PC-9 (cell line): ENCODE measurements at regions of chr16 and their contacts with region 1.

Region 1: DNA sequence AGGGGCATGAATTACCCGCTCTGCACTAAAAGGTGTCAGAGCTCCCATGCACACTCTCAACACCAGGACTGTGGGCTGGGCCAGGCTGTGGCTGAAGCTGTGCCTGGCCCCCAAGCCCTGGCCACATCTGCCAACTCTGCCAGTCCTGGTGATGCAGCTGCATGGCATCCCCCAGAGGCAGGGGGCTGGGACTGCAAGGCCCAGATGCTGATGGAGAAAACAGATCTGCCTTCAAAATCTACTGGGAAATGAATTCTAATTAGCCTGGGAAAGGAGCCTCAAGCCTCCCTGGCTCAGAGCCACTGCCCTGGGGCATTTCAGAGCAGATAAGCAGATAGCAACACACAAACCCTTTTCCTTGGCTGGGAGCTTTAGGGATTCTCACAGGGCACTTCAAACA is 3.4 kb downstream of the CHST6 start:
- DNase-seq: peak; percentile 77 to 88
- H3K4me3 ChIP-seq: no peak overlapping the region
- H3K27ac ChIP-seq: no peak overlapping the region
- H3K4me1 ChIP-seq: peaks cover 24% of the 10 kb centered on the region
- H3K27me3 ChIP-seq: no peaks in the 10 kb centered on the region
- CTCF ChIP-seq: peak; percentile 52

Region 2: DNA sequence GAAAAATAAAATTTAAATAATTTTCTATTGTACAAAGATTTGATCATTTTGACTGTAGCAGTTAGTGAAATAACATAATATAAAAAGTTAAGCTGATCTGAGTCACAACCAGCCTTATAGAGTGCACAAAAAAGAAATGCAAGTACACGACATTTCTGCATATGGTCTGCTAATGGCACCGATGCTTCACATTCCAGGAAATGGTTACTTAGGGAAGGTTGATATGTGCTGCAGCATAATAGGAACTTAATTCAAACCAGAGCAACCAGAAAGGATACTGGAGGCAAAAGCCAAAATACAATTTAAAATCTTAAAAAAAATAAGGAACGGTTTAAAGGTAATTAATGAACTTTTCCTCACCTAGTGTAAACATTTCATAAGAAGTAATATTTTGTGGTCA is 48.6 kb before region 1 on chr16:
- CTCF ChIA-PET with region 1: no interaction called
- POLR2A ChIA-PET with region 1: no interaction called
- intact Hi-C with region 1: no loop called
- DNase-seq: no peak
- H3K4me3 ChIP-seq: no peak overlapping the region
- H3K27ac ChIP-seq: no peak overlapping the region
- H3K4me1 ChIP-seq: no peaks in the 10 kb centered on the region
- H3K27me3 ChIP-seq: no peaks in the 10 kb centered on the region
- CTCF ChIP-seq: no peak

Region 3: DNA sequence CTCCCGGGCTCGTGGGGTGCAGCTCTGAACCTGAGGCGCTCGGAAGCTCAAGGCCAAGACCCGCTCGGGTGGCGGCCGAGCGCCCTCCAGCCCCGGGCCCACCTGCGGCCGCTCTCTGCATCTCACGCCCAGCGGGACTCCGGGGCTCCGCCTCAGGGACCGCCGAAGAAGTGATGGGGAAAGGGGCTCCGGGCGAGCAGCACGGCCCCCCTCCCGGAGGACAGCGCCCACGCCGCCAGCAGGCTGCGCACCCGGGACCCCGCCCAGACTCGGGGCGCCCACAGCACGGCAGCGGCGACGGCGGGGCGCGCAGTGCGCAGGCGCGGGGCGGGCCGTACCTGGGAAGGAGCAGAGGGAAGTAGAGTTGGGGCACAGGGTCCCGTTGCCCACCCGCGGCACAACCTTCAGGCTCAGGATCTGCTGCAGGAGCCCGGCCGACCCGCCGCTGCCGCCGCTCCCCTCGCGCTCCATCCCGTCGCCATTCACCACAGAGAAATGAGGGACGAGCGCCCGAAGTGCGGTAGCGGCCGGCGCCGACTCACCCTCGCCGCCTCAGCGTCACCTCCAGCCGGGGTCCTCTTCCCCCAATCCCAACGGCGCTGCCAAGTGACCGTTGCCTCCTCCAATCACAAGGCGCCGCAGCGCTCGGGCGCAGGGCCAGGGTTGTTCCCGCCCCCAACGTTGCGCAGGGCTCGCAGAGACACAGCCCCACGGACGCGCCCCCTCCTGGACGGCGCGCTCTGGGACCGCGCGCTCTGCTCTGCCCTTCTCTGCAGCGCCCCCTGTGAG is 27.6 kb before region 1 on chr16 and contains the start of gene TMEM170A:
- CTCF ChIA-PET with region 1: interaction called, 10 read pairs
- POLR2A ChIA-PET with region 1: no interaction called
- intact Hi-C with region 1: no loop called
- DNase-seq: peak; percentile 91 to 99
- H3K4me3 ChIP-seq: peak within 1 kb of the TSS; percentile 61
- H3K27ac ChIP-seq: peak within 1 kb of the TSS; percentile 45
- H3K4me1 ChIP-seq: peaks cover 18% of the 10 kb centered on the region
- H3K27me3 ChIP-seq: no peaks in the 10 kb centered on the region
- CTCF ChIP-seq: peak; percentile 100
- total RNA-seq, gene TMEM170A: 31.4 and 31.7 TPM in 2 replicates

Region 4: DNA sequence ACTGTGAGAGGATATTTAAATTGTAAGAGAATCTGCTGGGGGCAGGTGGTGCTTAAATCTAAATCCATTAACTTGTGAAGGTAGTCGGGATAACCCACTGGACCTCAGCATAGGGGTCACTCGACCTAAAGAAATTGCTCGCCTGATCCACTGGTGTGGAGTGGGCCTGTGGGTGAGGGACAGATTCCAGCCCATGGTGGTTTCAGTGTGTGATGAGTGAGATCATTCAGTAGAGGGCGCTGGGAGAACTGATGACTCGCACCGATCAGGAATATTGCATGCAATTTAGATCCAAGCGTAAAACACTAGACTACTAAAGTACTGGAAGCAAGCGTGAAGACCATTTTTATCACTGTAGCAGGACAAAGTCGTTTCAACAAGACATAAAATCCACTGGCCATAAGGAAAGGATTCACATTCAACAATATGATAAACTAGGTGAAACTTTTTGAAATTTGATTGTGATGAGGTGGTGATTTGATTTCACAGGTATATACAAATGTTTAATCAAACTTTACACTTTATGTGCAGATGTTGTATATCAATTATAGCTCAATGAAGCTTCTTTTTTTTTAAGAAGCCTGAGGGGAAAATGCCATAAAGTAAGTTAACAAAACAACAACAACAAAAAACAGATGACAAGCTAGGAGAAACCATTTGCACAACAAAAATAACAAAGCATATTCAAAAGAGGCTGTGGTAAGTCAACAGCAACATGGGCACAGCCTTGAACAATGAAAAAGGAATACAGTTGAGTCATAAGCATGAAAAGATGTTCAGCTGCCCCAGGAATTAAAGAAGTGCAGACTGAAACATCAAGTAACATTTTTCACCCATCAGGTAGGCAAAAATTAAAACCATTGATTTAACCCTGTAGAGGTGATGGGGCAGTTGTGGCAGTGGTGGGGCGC is 19.9 kb before region 1 on chr16:
- CTCF ChIA-PET with region 1: no interaction called
- POLR2A ChIA-PET with region 1: no interaction called
- intact Hi-C with region 1: loop called (anchors 1 kb)
- DNase-seq: peak; percentile 45 to 54
- H3K4me3 ChIP-seq: no peak overlapping the region
- H3K27ac ChIP-seq: no peak overlapping the region
- H3K4me1 ChIP-seq: 0 out of 2 replicates have a peak, but pooled peaks cover 5% of the 10 kb centered on the region
- H3K27me3 ChIP-seq: no peaks in the 10 kb centered on the region
- CTCF ChIP-seq: peak; percentile 81

Region 5: DNA sequence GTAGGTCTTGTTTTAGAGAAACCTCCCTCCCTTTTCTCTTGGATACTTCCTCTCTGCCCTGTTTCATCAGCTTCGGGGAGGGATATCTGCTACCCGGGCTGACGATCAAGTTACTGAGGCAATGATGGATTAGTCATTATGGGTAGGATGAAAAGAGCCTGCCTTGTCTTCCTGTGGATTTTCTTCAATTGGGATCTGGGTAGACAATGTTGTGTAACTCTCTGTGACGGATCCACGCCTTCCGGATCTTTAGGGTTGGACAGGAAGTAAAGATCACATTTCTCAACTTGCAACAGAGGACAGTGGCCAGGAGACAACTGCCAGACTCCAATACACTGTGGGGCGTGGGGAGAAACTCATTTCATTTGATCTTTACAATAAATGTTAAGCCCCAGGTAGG is 14.7 kb after region 1 on chr16:
- CTCF ChIA-PET with region 1: no interaction called
- POLR2A ChIA-PET with region 1: no interaction called
- intact Hi-C with region 1: no loop called
- DNase-seq: peak; percentile 48 to 87
- H3K4me3 ChIP-seq: no peak overlapping the region
- H3K27ac ChIP-seq: peak overlapping the region; percentile 91
- H3K4me1 ChIP-seq: peaks cover 45% of the 10 kb centered on the region
- H3K27me3 ChIP-seq: no peaks in the 10 kb centered on the region
- CTCF ChIP-seq: no peak